Mucosa of descending colon (tissue), 3 donors: ENCODE measurements at regions of chr12 and their contacts with region 1.

Region 1: GRCh38 chr12:55738123-55739024 is 4.5 kb upstream of the GDF11 start:
- DNase-seq: peak; percentile 80 to 96 (median 91)
- ATAC-seq: peak; percentile 65
- H3K4me3 ChIP-seq: no peak overlapping the region
- H3K4me1 ChIP-seq: peaks cover 11% of the 10 kb centered on the region
- CTCF ChIP-seq: peak; percentile 78

Region 2: GRCh38 chr12:55516391-55516790 is 222.0 kb before region 1 on chr12:
- intact Hi-C with region 1: no loop called
- DNase-seq: no peak
- ATAC-seq: no peak
- H3K4me3 ChIP-seq: no peak overlapping the region
- H3K4me1 ChIP-seq: no peaks in the 10 kb centered on the region
- CTCF ChIP-seq: no peak

Region 3: DNA sequence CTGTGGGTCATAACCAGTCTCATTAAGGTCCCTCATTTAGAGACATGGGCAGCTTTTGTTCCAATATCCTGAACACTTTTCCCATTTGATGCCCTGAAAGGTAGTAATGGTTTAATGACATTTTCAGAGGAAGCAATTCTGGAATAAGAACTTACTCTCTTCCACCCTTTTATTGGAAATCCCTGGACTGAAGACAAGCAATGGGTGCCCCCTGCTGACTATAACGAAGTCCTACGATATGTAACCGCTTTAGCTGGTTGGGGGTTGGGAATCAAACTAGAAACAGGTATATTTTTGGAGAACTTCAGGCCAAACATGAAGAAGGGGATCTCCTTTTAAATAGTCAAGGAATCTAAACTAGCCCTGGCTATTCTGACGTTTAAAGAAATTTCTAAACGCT is 58.7 kb after region 1 on chr12:
- intact Hi-C with region 1: loop called in 1 of 2 experiments (anchors 10 kb)
- DNase-seq: peak in 1 of 3 donors; percentile 49
- ATAC-seq: peak; percentile 66
- H3K4me3 ChIP-seq: no peak overlapping the region
- H3K4me1 ChIP-seq: no peaks in the 10 kb centered on the region
- CTCF ChIP-seq: no peak

Region 4: DNA sequence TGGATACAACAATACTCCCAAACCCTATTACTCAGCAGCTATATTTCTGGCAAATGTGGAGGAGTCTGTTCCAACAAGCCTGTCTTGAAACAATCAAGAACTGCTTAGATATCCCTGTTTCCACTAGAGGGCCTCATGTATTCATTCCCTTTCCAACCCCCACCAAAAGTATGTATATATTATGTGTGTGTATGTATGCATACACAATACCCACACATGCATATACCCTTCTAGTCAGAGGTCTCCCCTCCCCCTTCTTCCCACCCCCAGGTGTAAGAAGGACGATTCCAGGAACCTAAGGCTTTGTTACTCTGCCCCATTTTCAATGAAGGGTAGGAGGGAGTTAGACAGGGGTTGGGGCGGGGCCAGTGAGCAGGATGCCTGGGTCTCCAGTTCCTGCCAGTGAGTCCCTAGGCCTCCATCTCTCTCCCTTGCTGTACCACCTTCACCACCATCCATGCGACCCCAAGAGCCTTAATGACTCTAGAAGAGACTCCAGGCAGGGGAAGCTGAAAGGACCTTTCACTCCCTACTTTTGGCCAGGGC is 192.5 kb after region 1 on chr12 and contains the start of gene DGKA:
- intact Hi-C with region 1: loop called in 1 of 2 experiments (anchors 10 kb)
- DNase-seq: peak; percentile 75 to 87 (median 77)
- ATAC-seq: peak; percentile 43
- H3K4me3 ChIP-seq: peak within 1 kb of the TSS; percentile 56
- H3K4me1 ChIP-seq: peaks cover 39% of the 10 kb centered on the region
- CTCF ChIP-seq: peak; percentile 11
- total RNA-seq, gene DGKA: 82.6 to 148 (median 97.0) TPM

Region 5: DNA sequence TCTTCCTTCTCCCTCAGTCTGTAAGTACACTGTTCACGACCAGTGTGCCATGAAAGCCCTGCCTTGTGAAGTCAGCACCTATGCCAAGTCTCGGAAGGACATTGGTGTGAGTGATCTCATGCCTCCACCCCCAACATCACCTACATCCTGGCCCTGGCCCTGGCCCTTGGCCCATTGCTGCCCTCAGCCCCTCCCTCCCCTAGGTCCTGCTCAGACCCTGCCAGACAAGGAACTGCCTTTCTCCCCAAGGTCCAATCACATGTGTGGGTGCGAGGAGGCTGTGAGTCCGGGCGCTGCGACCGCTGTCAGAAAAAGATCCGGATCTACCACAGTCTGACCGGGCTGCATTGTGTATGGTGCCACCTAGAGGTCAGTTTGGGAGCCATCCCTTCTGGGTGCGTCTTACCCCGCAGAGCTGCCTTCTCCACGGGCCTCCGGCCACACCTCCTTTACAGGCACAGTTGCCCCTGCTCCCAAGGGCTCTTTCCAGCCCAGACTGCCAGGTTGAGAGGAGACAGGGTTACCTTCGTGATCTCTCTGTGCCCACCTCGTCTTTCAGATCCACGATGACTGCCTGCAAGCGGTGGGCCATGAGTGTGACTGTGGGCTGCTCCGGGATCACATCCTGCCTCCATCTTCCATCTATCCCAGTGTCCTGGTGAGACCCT is 201.8 kb after region 1 on chr12:
- intact Hi-C with region 1: loop called (anchors 5 to 10 kb)
- DNase-seq: peak; percentile 84 to 95 (median 86)
- ATAC-seq: peak; percentile 96
- H3K4me3 ChIP-seq: no peak overlapping the region
- H3K4me1 ChIP-seq: peaks cover 9% of the 10 kb centered on the region
- CTCF ChIP-seq: peak; percentile 67